RWPE1 (cell line): ENCODE measurements at regions of chr12 and their contacts with region 1.

Region 1: DNA sequence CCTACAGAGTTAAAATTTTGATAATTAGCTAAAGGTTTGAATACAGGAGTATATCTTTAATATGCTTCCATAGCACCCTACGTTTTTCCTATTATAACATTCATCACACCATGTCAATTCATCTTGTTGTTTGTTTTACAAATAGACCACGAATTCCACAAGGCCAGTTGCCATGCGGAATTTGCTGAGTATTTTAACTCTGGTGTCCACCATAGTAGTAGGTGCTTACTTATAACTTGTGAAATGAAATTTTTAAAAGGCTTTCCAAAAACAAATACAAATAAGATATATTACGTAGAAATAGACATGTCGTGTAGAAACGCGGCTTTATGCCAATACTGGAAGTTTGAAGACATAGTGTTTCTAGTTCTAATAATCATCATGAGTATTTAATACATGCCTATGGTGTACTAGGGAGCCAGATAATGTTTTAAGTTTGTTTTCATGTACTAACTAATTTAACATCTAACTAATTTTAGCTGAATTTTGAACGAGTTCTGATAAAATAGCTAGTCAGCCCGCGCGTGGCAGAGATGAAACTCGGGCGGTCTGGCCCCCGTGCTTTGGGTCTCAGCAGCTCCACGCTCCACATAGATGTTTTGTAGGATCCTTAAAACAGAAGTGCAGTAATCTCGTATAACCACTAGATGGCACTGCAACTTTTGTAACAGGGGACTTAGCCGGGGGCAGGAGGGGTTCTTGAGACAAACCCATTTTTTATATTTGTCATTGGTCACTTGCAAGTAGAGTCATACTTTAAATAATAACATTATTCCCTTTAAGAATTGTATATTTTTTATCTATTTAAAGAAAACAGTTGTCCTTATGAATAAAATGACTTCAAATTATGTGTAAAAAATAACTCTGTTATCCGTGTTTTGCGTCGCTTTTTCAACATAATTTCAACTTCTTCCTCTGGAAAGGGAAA is 10.2 kb downstream of the CD69 start:
- DNase-seq: peak; percentile 67
- H3K27ac ChIP-seq: no peak overlapping the region
- CTCF ChIP-seq: peak; percentile 58

Region 2: DNA sequence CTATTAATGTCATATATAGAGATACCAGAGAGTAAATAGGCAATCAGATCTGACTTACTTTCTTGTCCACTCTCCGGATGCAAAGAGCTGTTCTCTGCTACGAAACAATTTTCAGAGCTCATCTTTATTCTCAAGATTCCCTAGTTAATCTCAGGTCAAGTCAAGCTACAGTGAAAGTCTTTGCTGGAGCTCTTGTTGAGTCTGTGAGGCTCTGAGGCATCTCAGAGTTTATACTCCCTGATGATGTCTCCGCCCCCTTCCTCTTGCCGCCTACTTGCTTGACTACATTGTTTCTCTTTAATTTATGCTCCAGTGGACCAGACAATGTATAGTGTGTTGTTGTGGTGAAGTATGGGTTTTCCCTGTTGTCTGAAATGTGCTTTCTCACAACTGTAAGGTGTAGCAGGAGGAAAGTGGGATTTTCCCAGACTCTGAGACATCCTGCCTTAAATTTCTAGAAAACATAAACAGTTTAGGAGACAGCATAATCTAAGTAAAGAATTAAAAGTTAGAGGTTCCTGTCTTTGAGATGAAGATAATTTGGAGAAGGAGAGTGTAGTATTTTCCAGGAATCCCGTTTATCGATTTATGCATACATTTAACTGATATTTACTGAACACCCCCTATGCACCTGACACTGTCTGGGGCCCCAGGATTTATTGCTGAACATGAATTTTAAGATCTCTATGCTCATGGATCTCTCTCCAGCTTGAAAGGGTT is 10.3 kb after region 1 on chr12 and contains the start of gene CD69:
- CTCF ChIA-PET with region 1: interaction called, 11 read pairs
- POLR2A ChIA-PET with region 1: no interaction called
- DNase-seq: no peak
- H3K27ac ChIP-seq: no peak within 1 kb of the TSS
- CTCF ChIP-seq: no peak

Region 3: GRCh38 chr12:9797722-9798619 is 47.4 kb after region 1 on chr12:
- CTCF ChIA-PET with region 1: interaction called, 23 read pairs
- POLR2A ChIA-PET with region 1: no interaction called
- DNase-seq: peak; percentile 41
- H3K27ac ChIP-seq: no peak overlapping the region
- CTCF ChIP-seq: no peak